CD14-positive monocyte (primary cell): ENCODE measurements at regions of chr14 and their contacts with region 1.

Region 1: GRCh38 chr14:20782280-20782890 is 1.3 kb downstream of the RNASE6 start:
- DNase-seq: peak in 2 of 3 donors; percentile 50 to 66
- H3K4me3 ChIP-seq: peak overlapping the region; percentile 75 to 100 (median 93)
- H3K4me3 Mint-ChIP-seq: peak overlapping the region; percentile 95 to 99
- H3K27ac ChIP-seq: peak overlapping the region; percentile 85 to 98
- H3K27ac Mint-ChIP-seq: peak overlapping the region; percentile 93 to 100 (median 99)
- H3K4me1 ChIP-seq: peaks cover 59 to 74% of the 10 kb centered on the region in 2 donors
- H3K4me1 Mint-ChIP-seq: peaks cover 69% of the 10 kb centered on the region
- H3K27me3 ChIP-seq: no peaks in the 10 kb centered on the region
- H3K27me3 Mint-ChIP-seq: no peaks in the 10 kb centered on the region
- CTCF ChIP-seq: no peak

Region 2: DNA sequence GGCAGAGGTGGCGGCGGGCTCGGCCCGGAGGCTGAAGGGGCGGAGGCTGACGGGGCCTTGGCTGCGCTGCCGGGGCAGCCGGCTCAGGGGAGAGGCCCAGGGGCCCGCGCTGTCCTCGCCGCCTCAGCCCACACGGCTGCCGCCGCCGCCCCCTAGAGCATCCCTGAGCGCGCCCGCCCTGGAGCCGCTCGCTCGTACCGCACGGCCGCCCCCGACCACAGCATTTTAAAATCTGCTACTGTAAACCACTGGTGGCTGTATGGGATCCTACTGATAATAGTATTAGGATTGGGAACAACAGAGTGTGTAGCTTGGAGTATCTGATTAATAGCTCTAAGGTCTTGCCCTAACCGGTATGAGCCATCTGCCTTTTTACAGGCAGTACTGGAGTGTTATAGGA is 58.9 kb before region 1 on chr14:
- intact Hi-C with region 1: no loop called
- DNase-seq: no peak
- H3K4me3 ChIP-seq: peak overlapping the region; percentile 11 to 69 (median 36)
- H3K4me3 Mint-ChIP-seq: peak overlapping the region; percentile 70 to 84
- H3K27ac ChIP-seq: peak overlapping the region in 1 of 2 donors; percentile 46
- H3K27ac Mint-ChIP-seq: no peak overlapping the region
- H3K4me1 ChIP-seq: peaks cover 15 to 28% of the 10 kb centered on the region in 2 donors
- H3K4me1 Mint-ChIP-seq: peaks cover 25% of the 10 kb centered on the region
- H3K27me3 ChIP-seq: peaks cover 6 to 11% of the 10 kb centered on the region in 2 donors
- H3K27me3 Mint-ChIP-seq: peaks cover 24 to 30% (median 26%) of the 10 kb centered on the region in 3 donors
- CTCF ChIP-seq: no peak

Region 3: DNA sequence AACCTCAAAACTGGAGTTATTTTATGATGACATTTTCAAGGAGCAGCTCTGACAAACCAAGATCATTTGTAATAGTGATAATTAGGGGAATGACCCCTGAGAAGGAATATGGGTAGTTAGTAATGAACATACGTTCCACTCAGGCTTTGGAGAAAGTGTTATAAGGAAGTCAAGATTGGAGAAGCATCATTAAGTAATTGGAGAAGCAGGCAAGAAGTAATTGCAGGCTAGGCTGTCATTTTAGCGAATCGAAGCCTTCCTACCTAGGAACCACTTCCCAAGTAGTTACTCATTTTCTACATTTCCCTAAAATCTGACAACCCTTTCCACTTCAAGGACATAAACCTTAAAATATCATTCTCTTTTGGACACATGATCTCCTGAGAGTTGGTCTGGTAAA is 13.0 kb before region 1 on chr14:
- intact Hi-C with region 1: no loop called
- DNase-seq: peak in 2 of 3 donors; percentile 23 to 41
- H3K4me3 ChIP-seq: no peak overlapping the region
- H3K4me3 Mint-ChIP-seq: no peak overlapping the region
- H3K27ac ChIP-seq: no peak overlapping the region
- H3K27ac Mint-ChIP-seq: no peak overlapping the region
- H3K4me1 ChIP-seq: peaks cover 9 to 23% of the 10 kb centered on the region in 2 donors
- H3K4me1 Mint-ChIP-seq: peaks cover 20% of the 10 kb centered on the region
- H3K27me3 ChIP-seq: no peaks in the 10 kb centered on the region
- H3K27me3 Mint-ChIP-seq: peaks cover 0 to 2% (median 0%) of the 10 kb centered on the region in 3 donors
- CTCF ChIP-seq: no peak

Region 4: DNA sequence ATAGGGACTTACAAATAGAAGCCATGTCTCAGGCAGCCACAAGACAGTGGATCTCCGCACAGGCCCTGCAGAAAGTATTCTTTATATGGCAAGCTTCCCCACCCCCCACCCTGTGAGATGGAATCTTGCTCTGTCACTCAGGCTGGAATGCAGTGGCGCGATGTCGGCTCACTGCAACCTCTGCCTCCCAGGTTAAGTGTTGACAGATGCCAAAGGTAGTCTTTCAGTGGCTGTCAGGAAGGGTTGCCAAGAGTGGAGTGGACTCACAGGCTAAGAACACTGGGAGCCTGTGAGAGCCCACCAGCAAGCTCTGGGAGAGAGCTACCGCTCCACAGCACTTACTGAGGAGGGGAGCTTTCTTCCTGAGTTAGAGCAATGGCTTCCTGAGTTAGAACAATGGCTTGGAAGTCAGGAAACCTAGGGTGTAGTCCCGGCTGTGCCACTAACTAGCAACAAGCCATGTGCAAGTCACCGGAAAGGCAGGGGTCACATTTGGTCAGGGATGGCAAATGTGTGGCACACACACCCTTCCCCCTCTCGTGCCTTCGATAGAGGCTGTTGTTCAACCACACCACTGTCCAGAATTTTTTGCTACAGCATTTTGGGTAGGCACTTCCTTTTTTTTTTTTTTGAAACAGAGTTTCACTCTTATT is 17.6 kb after region 1 on chr14:
- intact Hi-C with region 1: loop called in 1 of 2 experiments (anchors 2 kb)
- DNase-seq: peak; percentile 68 to 79 (median 72)
- H3K4me3 ChIP-seq: peak overlapping the region in 1 of 3 experiments; percentile 64
- H3K4me3 Mint-ChIP-seq: peak overlapping the region; percentile 52 to 71
- H3K27ac ChIP-seq: peak overlapping the region; percentile 74 to 91
- H3K27ac Mint-ChIP-seq: peak overlapping the region; percentile 75 to 96 (median 93)
- H3K4me1 ChIP-seq: peaks cover 67 to 80% of the 10 kb centered on the region in 2 donors
- H3K4me1 Mint-ChIP-seq: peaks cover 71% of the 10 kb centered on the region
- H3K27me3 ChIP-seq: no peaks in the 10 kb centered on the region
- H3K27me3 Mint-ChIP-seq: peaks cover 0 to 3% (median 2%) of the 10 kb centered on the region in 3 donors
- CTCF ChIP-seq: no peak

Region 5: DNA sequence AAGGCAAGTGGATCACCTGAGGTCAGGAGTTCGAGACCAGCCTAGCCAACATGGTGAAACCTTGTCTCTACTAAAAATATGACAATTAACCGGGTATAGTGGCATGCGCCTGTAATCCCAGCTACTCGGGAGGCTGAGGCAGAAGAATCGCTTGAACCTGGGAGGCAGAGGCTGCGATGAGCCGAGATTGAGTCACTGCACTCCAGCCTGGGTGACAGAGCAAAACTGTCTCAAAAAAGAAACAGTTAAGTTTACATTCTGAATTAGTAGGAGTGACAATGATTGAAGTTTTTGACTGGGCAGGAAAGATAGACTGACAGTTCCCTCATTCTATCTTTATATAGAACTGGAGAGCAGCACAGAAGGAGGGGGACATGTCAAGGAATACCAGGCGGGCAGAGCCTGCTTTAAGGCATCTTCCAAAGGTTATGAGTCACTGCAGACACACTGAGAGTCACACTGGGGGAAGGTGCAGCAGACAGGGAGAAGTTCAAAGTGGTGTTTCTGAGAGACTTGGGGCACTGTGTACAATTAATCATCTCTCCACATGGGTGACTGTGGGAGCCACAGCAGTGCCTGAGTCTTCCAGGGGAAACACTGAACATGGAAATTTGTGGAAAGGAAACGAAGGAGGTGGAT is 66.0 kb after region 1 on chr14:
- intact Hi-C with region 1: loop called in 1 of 2 experiments (anchors 10 kb)
- DNase-seq: peak; percentile 59 to 81 (median 74)
- H3K4me3 ChIP-seq: no peak overlapping the region
- H3K4me3 Mint-ChIP-seq: peak overlapping the region in 1 of 2 donors; percentile 68
- H3K27ac ChIP-seq: peak overlapping the region in 1 of 2 donors; percentile 35
- H3K27ac Mint-ChIP-seq: peak overlapping the region; percentile 73 to 89 (median 84)
- H3K4me1 ChIP-seq: peaks cover 32 to 40% of the 10 kb centered on the region in 2 donors
- H3K4me1 Mint-ChIP-seq: peaks cover 29% of the 10 kb centered on the region
- H3K27me3 ChIP-seq: no peaks in the 10 kb centered on the region
- H3K27me3 Mint-ChIP-seq: peaks cover 0 to 3% (median 0%) of the 10 kb centered on the region in 3 donors
- CTCF ChIP-seq: no peak